ENCODE measurements at regions of chr9 and their contacts with region 1.

Region 1: DNA sequence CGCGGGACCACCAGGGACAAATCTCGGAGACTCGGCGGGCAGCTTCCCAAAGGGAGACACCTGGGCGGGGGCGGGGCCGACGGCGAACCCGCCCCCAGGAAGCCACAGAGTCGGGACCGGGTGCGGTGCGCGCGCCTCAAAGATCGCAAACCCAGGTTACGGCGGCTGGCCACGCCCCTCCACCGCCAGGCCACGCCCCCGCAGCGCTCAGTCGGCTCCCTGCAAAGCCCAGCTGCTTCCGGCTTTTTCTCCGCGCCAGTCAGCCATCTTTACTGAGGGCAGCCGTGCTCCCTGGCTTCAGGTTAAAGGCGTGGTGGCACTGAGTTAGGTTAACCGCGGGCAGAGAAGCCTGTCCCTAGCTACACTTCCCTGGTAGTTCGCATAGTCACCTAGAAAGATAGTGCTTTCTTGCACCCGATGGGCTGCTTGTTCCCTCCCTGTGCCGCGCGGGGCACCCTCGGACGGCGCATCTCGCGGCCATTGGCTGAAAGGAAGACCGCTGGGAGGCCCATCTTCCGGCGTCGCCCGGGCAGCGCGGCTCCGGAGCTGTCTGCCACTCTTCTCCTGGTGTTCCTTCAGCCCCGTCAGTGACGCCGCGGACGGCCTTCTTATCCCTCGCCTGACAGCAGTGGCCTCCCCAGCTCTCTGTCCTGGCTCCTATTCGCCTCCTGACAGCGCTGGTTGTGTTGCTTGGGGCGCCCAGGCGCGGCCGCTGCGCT is at the start of gene TBC1D2:
- DNase-seq: peak; percentile 97 to 98
- ATAC-seq: peak; percentile 99
- H3K4me3 ChIP-seq: peak within 1 kb of the TSS; percentile 77 to 92
- H3K27ac ChIP-seq: peak within 1 kb of the TSS; percentile 23 to 94
- H3K4me1 ChIP-seq: no peaks in the 10 kb centered on the region
- H3K27me3 ChIP-seq: no peaks in the 10 kb centered on the region
- total RNA-seq, gene TBC1D2: 9.7 to 12.4 TPM

Region 2: GRCh38 chr9:97768736-97769135 is 487.0 kb before region 1 on chr9:
- intact Hi-C with region 1: no loop called
- DNase-seq: no peak
- ATAC-seq: no peak
- H3K4me3 ChIP-seq: no peak overlapping the region
- H3K27ac ChIP-seq: no peak overlapping the region
- H3K4me1 ChIP-seq: no peaks in the 10 kb centered on the region
- H3K27me3 ChIP-seq: no peaks in the 10 kb centered on the region

Region 3: GRCh38 chr9:98074115-98074990 is 181.4 kb before region 1 on chr9:
- intact Hi-C with region 1: loop called (anchors 5 to 10 kb)
- DNase-seq: peak in 1 of 2 donors; percentile 67
- ATAC-seq: peak; percentile 70
- H3K4me3 ChIP-seq: no peak overlapping the region
- H3K27ac ChIP-seq: no peak overlapping the region
- H3K4me1 ChIP-seq: no peaks in the 10 kb centered on the region
- H3K27me3 ChIP-seq: no peaks in the 10 kb centered on the region

Region 4: DNA sequence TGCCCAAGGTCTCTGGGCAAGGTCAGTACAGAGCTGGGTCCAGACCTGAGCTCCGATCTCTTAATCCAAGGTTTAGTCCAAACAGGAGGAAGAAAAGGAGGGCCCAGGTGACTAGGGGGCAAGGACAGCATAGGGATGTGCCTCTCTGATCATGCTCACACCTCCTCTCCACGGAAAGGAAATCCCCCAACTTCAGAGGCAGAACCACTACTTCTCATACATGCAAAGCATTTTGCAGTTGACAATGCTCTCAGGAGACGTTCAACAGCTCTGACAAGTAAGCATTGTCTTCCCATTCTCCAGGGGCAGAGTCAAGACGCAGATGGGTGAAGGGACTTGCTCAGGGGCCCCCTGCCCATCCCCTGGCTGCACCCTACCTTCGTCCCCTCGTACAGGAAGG is 54.6 kb before region 1 on chr9:
- intact Hi-C with region 1: loop called (anchors 5 kb)
- DNase-seq: no peak
- ATAC-seq: no peak
- H3K4me3 ChIP-seq: no peak overlapping the region
- H3K27ac ChIP-seq: no peak overlapping the region
- H3K4me1 ChIP-seq: no peaks in the 10 kb centered on the region
- H3K27me3 ChIP-seq: no peaks in the 10 kb centered on the region

Region 5: DNA sequence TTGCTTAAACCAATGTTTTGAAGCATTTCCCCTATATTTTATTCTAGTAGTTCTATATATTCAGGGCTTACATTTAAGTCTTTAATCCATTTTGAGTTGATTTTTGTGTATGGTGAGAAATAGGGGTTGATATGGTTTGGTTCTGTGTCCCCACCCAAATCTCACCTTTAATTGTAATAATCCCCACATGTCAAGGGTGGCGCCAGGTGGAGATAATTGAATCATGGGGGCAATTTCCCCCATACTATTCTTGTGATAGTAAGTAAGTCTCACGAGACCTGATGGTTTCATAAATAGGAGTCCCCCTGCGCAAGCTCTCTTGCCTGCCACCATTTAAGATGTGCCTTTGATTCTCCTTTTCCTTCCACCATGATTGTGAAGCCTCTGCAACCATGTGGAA is 91.9 kb after region 1 on chr9:
- intact Hi-C with region 1: no loop called
- DNase-seq: no peak
- ATAC-seq: no peak
- H3K4me3 ChIP-seq: no peak overlapping the region
- H3K27ac ChIP-seq: no peak overlapping the region
- H3K4me1 ChIP-seq: no peaks in the 10 kb centered on the region
- H3K27me3 ChIP-seq: no peaks in the 10 kb centered on the region

Measured in aorta (tissue), 5 donors.